Dendritic cell treated with granulocyte-macrophage colony-stimulating factor and Interleukin-4, amounts not matched to agents 40 ng/mL and 50 ng/mL, for 4 days (primary cell): ENCODE measurements at regions of chr11 and their contacts with region 1.

Region 1: DNA sequence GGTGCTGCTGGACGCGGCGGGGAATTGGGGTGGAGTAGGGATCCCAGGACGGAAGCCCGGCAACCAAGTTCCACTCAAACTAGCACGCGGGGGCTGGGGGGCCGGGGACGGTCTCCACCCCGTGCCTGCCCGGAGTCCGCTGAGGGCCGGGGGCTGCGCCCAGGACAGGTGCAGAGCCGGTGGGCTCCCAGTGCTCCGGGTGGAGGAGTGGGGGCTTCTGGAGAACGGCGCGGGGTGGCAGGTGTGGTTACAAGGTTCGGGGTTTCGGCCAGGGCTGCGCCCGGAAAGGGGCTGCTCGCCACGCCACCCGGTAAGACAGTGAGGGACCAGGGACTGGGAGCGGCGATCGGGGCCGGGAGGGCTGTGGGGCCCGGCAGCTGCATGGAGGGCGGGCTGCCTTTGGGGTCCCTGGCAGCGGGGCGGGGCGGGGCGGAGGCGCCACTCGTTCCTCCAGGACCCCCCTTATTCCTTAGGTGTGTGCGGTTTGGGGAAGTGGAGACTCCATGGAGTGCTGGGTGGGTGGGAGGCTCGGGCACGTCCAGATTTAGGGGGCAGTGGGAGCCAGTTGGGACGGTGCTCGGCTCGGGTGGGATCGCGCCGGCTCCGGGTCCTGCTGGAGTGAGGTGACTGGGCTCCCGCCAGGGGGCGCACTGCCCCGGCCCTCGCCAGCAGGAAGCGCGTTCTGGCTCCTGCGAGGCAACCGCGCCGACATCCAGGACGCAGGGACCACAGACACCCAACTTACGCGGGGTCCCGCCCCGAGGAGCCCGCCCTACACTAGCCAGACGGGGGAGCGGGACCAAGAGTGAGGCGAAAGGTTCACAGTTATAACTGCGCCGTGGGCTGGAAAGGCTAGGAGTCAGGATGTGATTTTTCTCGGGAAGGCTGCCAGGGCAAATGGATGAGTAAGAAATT is 868 bp downstream of the TSPAN18 start:
- H3K4me3 Mint-ChIP-seq: peak overlapping the region; percentile 68
- H3K27ac Mint-ChIP-seq: no peak overlapping the region
- H3K4me1 Mint-ChIP-seq: peaks cover 13% of the 10 kb centered on the region
- H3K27me3 Mint-ChIP-seq: peaks cover 68% of the 10 kb centered on the region

Region 2: GRCh38 chr11:44893846-44894617 is 166.4 kb after region 1 on chr11:
- intact Hi-C with region 1: loop called (anchors 1 kb)
- H3K4me3 Mint-ChIP-seq: no peak overlapping the region
- H3K27ac Mint-ChIP-seq: no peak overlapping the region
- H3K4me1 Mint-ChIP-seq: no peaks in the 10 kb centered on the region
- H3K27me3 Mint-ChIP-seq: peaks cover 28% of the 10 kb centered on the region

Region 3: GRCh38 chr11:44950625-44951476 is 223.2 kb after region 1 on chr11 and contains the start of gene TP53I11:
- intact Hi-C with region 1: no loop called
- H3K4me3 Mint-ChIP-seq: peak within 1 kb of the TSS; percentile 83
- H3K27ac Mint-ChIP-seq: peak within 1 kb of the TSS; percentile 74
- H3K4me1 Mint-ChIP-seq: peaks cover 53% of the 10 kb centered on the region
- H3K27me3 Mint-ChIP-seq: peaks cover 15% of the 10 kb centered on the region